Prostate gland (tissue), 2 donors: ENCODE measurements at regions of chr3 and their contacts with region 1.

Region 1: DNA sequence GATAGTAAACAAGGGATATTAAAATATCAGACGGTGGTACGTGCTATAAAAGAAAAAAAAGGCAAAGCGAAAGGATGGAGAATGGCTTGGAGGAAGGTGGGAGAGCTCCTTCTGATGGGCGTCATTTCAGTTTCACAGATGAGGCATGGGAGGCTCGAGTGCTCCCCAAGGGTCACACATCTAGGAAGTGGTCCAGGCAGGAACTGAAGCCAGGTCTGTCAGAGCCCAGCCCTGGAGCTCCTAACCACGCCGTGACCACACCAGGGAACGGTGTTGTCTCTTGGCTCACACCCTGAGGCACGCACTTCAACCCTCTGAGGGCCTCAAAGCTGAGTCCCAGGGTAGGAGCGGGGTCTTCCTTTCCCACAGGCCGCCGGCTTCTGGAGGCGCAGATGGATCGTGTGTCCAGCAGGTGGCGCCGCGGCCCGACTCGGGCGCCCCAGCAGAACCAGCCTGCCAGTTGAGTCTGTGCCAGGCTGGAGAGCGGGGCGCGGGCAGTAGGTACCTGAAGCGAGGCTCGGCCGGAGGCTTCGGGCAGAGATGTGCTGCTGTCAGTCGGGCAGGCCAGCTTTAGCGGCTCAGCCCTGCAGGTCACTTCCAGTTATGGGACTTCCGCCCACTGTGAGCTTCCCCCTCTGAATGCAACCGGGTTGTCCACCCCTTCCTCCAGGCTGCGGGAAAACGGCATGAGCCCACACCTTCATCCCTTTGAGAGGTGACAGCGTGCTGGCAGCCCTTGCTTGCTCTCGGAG is 68.1 kb downstream of the SLC6A1 start:
- DNase-seq: peak; percentile 39
- H3K4me3 ChIP-seq: peak overlapping the region in 1 of 2 donors; percentile 8
- H3K27ac ChIP-seq: no peak overlapping the region
- H3K4me1 ChIP-seq: no peaks in the 10 kb centered on the region
- H3K27me3 ChIP-seq: peaks cover 11% of the 10 kb centered on the region
- CTCF ChIP-seq: peak; percentile 65 to 91 (median 79)
- POLR2A ChIP-seq: no peak

Region 2: DNA sequence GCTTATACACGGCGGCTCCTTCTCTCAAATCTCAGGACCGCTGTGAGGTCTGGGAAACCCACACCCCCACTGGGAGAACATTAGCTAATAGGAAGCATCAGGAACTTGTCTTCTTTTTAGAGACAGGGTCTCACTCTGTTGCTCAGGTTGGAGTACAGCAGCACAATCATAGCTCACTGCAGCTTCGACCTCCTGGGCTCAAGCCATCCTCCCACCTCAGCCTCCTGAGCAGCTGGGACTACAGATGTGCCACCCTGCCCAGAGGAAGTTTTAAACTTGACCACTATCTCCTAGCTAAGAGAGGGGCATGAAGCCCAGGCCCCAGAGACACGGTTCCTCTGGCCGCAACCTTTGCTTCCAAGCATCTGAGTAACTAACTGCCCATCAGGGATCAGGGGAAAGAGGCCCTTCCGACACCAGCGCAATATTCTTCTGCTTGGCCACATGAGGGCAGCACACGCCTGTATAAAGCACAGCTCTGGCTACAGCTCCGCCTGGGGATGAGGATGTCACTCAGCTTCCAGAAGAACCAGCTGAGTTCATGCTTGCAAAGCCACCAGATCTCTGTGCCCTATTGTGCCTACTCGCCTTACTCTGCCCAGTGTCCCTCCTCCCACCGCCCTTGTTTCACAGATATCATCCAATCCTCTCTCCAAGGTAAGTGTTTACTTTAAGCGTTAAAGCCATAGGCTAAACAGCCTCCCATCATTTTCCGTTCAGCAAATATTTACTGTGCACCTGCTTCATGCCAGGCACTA is 302.2 kb before region 1 on chr3:
- intact Hi-C with region 1: loop called (anchors 2 kb)
- DNase-seq: peak; percentile 41
- H3K4me3 ChIP-seq: no peak overlapping the region
- H3K27ac ChIP-seq: no peak overlapping the region
- H3K4me1 ChIP-seq: no peaks in the 10 kb centered on the region
- H3K27me3 ChIP-seq: peaks cover 4% of the 10 kb centered on the region
- CTCF ChIP-seq: peak; percentile 22 to 77 (median 72)
- POLR2A ChIP-seq: no peak

Region 3: GRCh38 chr3:10945683-10946287 is 114.9 kb before region 1 on chr3:
- intact Hi-C with region 1: loop called (anchors 2 kb)
- DNase-seq: peak; percentile 40
- H3K4me3 ChIP-seq: no peak overlapping the region
- H3K27ac ChIP-seq: no peak overlapping the region
- H3K4me1 ChIP-seq: no peaks in the 10 kb centered on the region
- H3K27me3 ChIP-seq: no peaks in the 10 kb centered on the region
- CTCF ChIP-seq: peak; percentile 70 to 86 (median 80)
- POLR2A ChIP-seq: no peak

Region 4: GRCh38 chr3:10964537-10965167 is 96.0 kb before region 1 on chr3:
- intact Hi-C with region 1: no loop called
- DNase-seq: no peak
- H3K4me3 ChIP-seq: no peak overlapping the region
- H3K27ac ChIP-seq: no peak overlapping the region
- H3K4me1 ChIP-seq: no peaks in the 10 kb centered on the region
- H3K27me3 ChIP-seq: peaks cover 3% of the 10 kb centered on the region
- CTCF ChIP-seq: no peak
- POLR2A ChIP-seq: no peak

Region 5: GRCh38 chr3:10974746-10975375 is 85.8 kb before region 1 on chr3:
- intact Hi-C with region 1: no loop called
- DNase-seq: no peak
- H3K4me3 ChIP-seq: no peak overlapping the region
- H3K27ac ChIP-seq: no peak overlapping the region
- H3K4me1 ChIP-seq: no peaks in the 10 kb centered on the region
- H3K27me3 ChIP-seq: peaks cover 7% of the 10 kb centered on the region
- CTCF ChIP-seq: no peak
- POLR2A ChIP-seq: no peak